Activated naive CD4-positive, alpha-beta T cell treated with anti-CD3 and anti-CD28 coated beads for 36 hours (primary cell): ENCODE measurements at regions of chr14 and their contacts with region 1.

Region 1: DNA sequence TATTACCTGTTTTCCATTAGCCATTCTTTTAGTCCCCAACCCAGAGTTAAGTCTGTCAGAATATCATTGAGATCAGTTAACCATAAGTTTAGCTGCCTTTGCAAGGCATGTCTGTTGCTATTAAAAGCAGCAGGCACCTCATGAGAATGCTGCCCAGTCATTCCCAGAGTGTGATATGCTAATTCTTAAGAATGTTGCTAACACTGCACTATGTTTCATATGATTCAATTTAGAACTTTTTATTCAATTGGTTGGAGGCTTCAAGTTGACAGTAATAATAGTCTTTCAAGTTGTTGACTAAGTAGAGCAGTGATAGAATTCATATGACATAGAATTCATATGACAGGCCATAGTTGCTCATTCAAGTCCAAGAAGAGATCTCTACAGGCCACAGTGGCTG is 292.3 kb downstream of the FUT8 start:
- DNase-seq: peak; percentile 75
- H3K4me3 Mint-ChIP-seq: no peak overlapping the region
- H3K27ac Mint-ChIP-seq: peak overlapping the region; percentile 72
- H3K4me1 Mint-ChIP-seq: peaks cover 12% of the 10 kb centered on the region
- H3K27me3 Mint-ChIP-seq: no peaks in the 10 kb centered on the region

Region 2: GRCh38 chr14:65281991-65282895 is 422.6 kb before region 1 on chr14:
- CTCF ChIA-PET with region 1: no interaction called
- intact Hi-C with region 1: loop called (anchors 10 kb)
- DNase-seq: peak; percentile 22
- H3K4me3 Mint-ChIP-seq: peak overlapping the region; percentile 54
- H3K27ac Mint-ChIP-seq: peak overlapping the region; percentile 73
- H3K4me1 Mint-ChIP-seq: peaks cover 30% of the 10 kb centered on the region
- H3K27me3 Mint-ChIP-seq: no peaks in the 10 kb centered on the region

Region 3: GRCh38 chr14:65731933-65732510 is 27.2 kb after region 1 on chr14:
- CTCF ChIA-PET with region 1: interaction called, 4 read pairs
- intact Hi-C with region 1: loop called (anchors 1 kb)
- DNase-seq: peak; percentile 23
- H3K4me3 Mint-ChIP-seq: no peak overlapping the region
- H3K27ac Mint-ChIP-seq: no peak overlapping the region
- H3K4me1 Mint-ChIP-seq: peaks cover 14% of the 10 kb centered on the region
- H3K27me3 Mint-ChIP-seq: no peaks in the 10 kb centered on the region

Region 4: GRCh38 chr14:65847075-65847847 is 142.4 kb after region 1 on chr14:
- CTCF ChIA-PET with region 1: no interaction called
- intact Hi-C with region 1: loop called (anchors 2 kb)
- DNase-seq: peak; percentile 83
- H3K4me3 Mint-ChIP-seq: no peak overlapping the region
- H3K27ac Mint-ChIP-seq: peak overlapping the region; percentile 71
- H3K4me1 Mint-ChIP-seq: peaks cover 62% of the 10 kb centered on the region
- H3K27me3 Mint-ChIP-seq: no peaks in the 10 kb centered on the region

Region 5: GRCh38 chr14:65927931-65928356 is 223.1 kb after region 1 on chr14:
- CTCF ChIA-PET with region 1: no interaction called
- intact Hi-C with region 1: loop called (anchors 10 kb)
- DNase-seq: peak; percentile 96
- H3K4me3 Mint-ChIP-seq: no peak overlapping the region
- H3K27ac Mint-ChIP-seq: peak overlapping the region; percentile 22
- H3K4me1 Mint-ChIP-seq: peaks cover 41% of the 10 kb centered on the region
- H3K27me3 Mint-ChIP-seq: no peaks in the 10 kb centered on the region